HEK293T (cell line): ENCODE measurements at regions of chr6 and their contacts with region 1.

Region 1: GRCh38 chr6:89819336-89820130 is at the start of gene MDN1:
- DNase-seq: peak; percentile 93

Region 2: GRCh38 chr6:89805814-89806371 is 13.6 kb before region 1 on chr6:
- CTCF ChIA-PET with region 1: interaction called, 3 read pairs
- POLR2A ChIA-PET with region 1: interaction called, 15 read pairs
- DNase-seq: no peak